Psoas muscle (tissue), 8 donors: ENCODE measurements at regions of chr12 and their contacts with region 1.

Region 1: DNA sequence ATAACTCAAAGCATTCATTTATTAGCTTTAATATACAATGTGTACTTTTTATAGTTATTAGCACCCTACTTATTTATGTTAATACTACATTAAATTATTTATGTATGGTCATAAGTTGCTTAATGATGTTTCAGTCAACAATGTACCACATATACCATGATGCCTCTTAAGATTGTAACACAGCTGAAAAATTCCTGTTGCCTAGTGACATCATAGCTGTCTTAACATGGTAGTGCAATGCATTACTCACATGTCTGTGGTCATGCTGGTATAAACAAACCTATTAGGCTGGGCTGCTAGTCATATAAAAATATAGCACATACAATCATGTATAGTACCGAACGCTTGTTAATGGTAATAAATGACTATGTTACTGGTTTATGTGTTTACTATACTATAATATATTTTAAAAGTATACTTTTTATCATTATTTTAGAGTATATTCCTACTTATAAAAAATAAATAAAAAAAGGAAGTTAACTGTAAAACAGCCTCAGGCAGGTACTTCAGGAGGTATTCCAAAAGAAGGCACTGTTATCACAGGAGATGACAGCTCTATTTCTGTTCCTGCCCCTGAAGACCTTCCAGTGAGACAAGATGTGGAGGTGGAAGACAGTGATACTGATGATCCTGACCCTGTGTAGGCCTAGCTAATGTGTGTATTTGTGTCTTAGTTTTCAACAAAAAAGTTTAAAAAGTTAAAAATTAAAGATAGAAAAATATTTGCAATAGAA is 120.6 kb downstream of the ANO6 start:
- DNase-seq: no peak
- ATAC-seq: peak; percentile 71 to 79 (median 77)
- H3K4me3 ChIP-seq: no peak overlapping the region
- H3K27ac ChIP-seq: peak overlapping the region; percentile 70
- H3K4me1 ChIP-seq: peaks cover 29% of the 10 kb centered on the region
- H3K27me3 ChIP-seq: no peaks in the 10 kb centered on the region
- CTCF ChIP-seq: no peak

Region 2: DNA sequence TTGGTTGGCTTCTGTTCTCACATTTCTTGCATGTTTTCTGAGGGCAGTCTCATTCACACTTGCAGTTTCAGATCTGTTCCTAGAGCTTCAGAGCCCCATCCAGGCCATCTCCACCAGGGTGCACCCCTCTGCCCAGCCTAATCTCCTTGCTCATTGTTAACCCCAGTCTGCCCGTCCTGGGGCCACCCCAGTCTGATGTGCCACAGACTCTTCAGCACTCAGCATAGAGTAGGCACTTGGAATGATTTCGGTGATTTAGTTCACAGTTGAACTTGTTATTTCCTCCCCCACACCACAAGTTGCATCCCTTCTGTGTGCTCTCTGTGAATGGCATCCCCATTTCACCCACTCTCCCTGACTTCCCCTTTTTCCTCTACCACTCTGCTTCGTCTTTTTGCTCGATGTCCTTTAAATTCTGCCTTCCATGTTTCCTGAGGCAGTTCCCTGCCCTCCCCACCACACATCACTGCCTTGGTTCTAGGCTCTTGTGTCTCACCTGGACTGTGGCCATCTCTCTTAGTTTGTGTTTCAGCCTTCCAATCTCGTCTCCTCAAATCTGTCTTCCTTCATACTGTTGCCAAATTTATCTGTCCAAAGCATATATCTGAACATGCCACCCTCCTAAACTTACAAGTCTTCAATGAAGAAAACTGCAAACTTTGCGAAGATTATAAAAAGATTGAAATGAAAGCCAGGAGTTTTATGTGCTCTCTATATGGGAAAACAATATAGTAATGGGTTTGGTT is 79.1 kb before region 1 on chr12:
- intact Hi-C with region 1: no loop called
- DNase-seq: no peak
- ATAC-seq: peak in 3 of 4 donors; percentile 30 to 38 (median 36)
- H3K4me3 ChIP-seq: no peak overlapping the region
- H3K27ac ChIP-seq: no peak overlapping the region
- H3K4me1 ChIP-seq: peaks cover 61% of the 10 kb centered on the region
- H3K27me3 ChIP-seq: no peaks in the 10 kb centered on the region
- CTCF ChIP-seq: no peak

Region 3: GRCh38 chr12:45298716-45299692 is 37.5 kb before region 1 on chr12:
- intact Hi-C with region 1: loop called (anchors 5 kb)
- DNase-seq: no peak
- ATAC-seq: peak; percentile 37 to 67 (median 52)
- H3K4me3 ChIP-seq: no peak overlapping the region
- H3K27ac ChIP-seq: peak overlapping the region; percentile 89
- H3K4me1 ChIP-seq: peaks cover 91% of the 10 kb centered on the region
- H3K27me3 ChIP-seq: no peaks in the 10 kb centered on the region
- CTCF ChIP-seq: no peak